ENCODE measurements at regions of chr9 and their contacts with region 1.

Region 1: DNA sequence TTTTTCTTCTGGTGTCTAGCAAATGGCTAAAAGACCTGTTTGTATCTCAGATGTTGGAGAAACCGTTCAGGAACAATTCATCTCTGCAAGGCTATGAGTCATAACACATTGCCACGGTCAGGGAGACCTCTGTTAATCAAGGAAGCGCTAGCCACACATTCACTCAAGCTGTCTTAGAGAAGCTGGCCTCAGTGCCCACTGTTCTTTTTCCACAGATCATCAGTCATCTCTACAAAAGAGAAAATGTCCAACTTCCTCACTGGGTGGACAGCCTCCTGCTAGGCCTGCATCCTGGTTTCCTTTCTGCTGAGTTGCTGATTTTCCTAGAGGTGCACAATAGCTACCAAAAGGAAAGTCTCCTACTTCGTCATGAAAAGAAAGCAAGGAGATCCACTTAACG is 360.5 kb downstream of the BNC2 start:
- DNase-seq: no peak
- H3K4me3 Mint-ChIP-seq: no peak overlapping the region
- H3K27ac Mint-ChIP-seq: no peak overlapping the region
- H3K4me1 Mint-ChIP-seq: no peaks in the 10 kb centered on the region
- H3K27me3 Mint-ChIP-seq: no peaks in the 10 kb centered on the region

Region 2: DNA sequence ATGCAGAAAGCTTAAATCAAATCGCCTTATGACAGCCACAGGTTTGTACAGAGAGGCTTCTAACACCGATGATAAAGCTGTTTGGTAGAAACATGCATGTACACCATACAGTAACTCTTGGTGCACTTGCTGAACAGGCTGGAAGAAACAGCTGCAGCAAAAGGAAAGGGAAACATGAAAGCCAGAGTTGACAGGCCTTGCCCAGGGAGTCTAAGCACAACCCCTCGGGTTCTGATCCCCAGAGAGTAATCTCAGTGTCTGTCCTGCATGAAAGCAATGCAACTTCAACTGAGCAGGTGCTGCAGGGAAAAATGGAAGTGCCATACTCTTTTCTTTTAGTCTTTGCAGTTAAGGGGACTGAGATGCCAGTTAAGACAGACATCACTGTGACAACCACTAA is 59.4 kb before region 1 on chr9:
- CTCF ChIA-PET with region 1: no interaction called
- intact Hi-C with region 1: loop called (anchors 5 kb)
- DNase-seq: no peak
- H3K4me3 Mint-ChIP-seq: no peak overlapping the region
- H3K27ac Mint-ChIP-seq: no peak overlapping the region
- H3K4me1 Mint-ChIP-seq: no peaks in the 10 kb centered on the region
- H3K27me3 Mint-ChIP-seq: no peaks in the 10 kb centered on the region

Region 3: DNA sequence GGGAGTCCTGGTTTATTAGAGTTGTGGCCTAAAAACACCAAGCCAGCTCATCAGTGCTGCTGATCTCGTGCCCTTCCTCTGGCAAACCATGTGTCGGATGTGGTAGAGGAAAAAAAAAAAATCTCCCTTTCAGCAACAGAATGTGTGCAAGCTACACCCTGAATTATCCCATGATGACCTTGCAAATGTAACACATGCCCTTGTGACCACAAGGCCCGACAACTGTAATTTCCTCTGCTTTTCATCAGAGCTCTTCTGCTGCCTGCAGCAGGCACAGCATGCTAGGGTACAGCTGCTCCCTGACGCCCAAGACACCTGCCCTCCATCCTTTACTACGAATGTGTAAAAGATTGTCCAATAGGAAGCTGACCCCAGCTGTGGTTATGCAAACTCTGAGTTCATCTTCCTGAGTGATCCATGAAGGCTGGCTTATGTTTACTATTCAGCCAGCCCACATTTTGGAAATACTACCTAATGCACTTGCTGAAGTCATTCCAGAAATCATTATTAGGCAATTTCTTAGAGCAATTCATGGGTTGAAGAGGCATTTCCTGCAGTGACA is 375.0 kb after region 1 on chr9:
- CTCF ChIA-PET with region 1: no interaction called
- intact Hi-C with region 1: no loop called
- DNase-seq: no peak
- H3K4me3 Mint-ChIP-seq: no peak overlapping the region
- H3K27ac Mint-ChIP-seq: no peak overlapping the region
- H3K4me1 Mint-ChIP-seq: no peaks in the 10 kb centered on the region
- H3K27me3 Mint-ChIP-seq: peaks cover 5% of the 10 kb centered on the region

Measured in activated naive CD4-positive, alpha-beta T cell treated with anti-CD3 and anti-CD28 coated beads for 36 hours (primary cell).